CD8-positive, alpha-beta memory T cell (primary cell): ENCODE measurements at regions of chr11 and their contacts with region 1.

Region 1: DNA sequence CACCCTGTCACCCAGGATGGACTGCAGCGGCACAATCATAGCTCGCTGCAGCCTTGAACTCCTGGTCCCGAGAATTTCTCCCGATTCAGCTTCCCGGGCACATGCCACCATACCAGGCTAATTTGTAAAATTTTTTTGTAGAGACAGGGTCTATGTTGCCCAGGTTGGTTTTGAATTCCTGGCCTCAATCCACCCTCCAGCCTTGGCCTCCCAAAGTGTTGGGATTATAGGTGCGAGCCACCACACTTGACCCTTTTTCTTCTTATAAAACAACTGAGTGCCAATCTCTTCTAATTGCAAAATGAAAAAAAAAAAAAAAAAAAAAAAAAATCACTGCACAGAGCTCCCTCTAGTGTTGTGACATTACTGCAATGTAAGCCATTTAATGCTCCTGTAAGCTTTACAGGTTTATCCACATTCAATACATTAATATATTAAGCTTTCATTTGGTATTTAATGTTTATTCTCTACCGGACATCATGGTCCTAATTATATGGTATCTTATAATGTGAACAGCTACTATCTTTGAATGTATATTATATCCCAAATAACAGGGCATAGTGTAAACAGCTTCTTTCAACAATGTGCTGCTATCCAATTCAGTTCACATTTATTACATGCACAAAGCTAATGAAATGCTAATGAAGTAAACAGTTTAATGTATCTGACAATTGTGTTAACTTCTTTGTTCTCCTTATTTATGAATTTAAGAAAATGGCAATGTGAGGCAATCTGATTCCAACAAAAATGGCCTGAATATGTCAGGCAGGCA is 44.6 kb downstream of the COPB1 start:
- DNase-seq: peak in 2 of 5 donors; percentile 11 to 19
- H3K4me3 ChIP-seq: no peak overlapping the region
- H3K4me3 Mint-ChIP-seq: no peak overlapping the region
- H3K27ac ChIP-seq: no peak overlapping the region
- H3K27ac Mint-ChIP-seq: peak overlapping the region in 3 of 8 donors; percentile 33 to 59 (median 47)
- H3K4me1 ChIP-seq: no peaks in the 10 kb centered on the region
- H3K4me1 Mint-ChIP-seq: peaks cover 15 to 22% (median 15%) of the 10 kb centered on the region in 3 donors
- H3K27me3 ChIP-seq: no peaks in the 10 kb centered on the region
- H3K27me3 Mint-ChIP-seq: no peaks in the 10 kb centered on the region

Region 2: DNA sequence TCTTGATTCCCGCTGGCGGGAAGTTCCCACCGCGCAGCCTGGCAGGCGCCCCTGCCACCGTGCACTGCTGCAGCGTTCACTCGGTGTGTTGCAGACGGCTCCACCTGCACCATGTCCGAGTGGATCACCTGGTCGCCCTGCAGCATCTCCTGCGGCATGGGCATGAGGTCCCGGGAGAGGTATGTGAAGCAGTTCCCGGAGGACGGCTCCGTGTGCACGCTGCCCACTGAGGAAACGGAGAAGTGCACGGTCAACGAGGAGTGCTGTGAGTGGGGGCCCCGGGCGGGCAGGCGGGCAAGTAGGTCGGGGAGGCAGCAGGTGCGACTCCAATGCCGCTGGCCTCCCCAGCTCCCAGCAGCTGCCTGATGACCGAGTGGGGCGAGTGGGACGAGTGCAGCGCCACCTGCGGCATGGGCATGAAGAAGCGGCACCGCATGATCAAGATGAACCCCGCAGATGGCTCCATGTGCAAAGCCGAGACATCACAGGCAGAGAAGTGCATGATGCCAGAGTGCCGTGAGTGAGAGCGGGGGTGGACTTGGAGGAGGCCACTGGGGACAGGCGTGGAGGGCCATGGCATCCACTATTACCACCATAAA is 195.8 kb before region 1 on chr11:
- CTCF ChIA-PET with region 1: no interaction called
- POLR2A ChIA-PET with region 1: no interaction called
- DNase-seq: no peak
- H3K4me3 ChIP-seq: no peak overlapping the region
- H3K4me3 Mint-ChIP-seq: no peak overlapping the region
- H3K27ac ChIP-seq: no peak overlapping the region
- H3K27ac Mint-ChIP-seq: no peak overlapping the region
- H3K4me1 ChIP-seq: no peaks in the 10 kb centered on the region
- H3K4me1 Mint-ChIP-seq: no peaks in the 10 kb centered on the region
- H3K27me3 ChIP-seq: no peaks in the 10 kb centered on the region
- H3K27me3 Mint-ChIP-seq: peaks cover 0 to 6% of the 10 kb centered on the region in 2 donors

Region 3: DNA sequence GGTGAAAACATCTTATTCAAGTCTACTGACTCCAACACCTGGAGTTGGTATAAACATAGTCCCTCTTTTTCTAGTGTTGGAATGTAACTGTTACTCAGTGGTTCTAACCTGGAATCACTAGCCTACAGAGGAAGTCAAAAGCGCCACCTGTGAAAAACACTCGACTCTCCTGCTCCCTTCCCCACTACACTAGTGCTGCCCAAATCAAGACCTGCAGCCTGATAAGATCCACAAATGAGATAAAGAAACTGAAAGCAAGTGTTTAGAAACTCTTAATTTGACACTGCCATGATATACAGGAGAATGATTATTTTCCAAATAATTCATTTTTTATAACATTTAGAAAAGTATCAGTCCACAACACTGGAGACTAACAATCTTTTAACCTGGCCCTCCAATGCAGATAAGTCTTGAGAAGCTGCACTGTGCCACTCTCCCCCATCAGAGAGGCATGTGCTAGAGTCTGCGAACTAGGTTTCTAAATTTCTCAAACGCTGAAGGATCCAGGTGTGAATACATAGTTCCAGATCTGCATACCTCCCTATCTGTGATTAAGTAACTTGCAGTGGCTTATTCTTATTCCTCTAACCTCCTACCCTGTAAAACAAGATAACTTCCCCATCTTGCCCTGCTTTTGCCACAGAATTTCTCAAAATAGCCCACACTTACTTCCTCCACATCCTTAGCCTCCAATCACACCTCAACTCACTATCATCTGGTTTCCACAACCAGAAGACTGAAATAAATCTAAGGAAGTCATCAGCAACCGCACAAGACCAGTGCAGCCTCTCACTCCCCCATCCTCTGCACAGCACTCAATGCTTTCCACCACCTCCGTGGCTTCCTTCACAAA is 184.1 kb before region 1 on chr11:
- CTCF ChIA-PET with region 1: no interaction called
- POLR2A ChIA-PET with region 1: no interaction called
- DNase-seq: peak in 1 of 5 donors; percentile 29
- H3K4me3 ChIP-seq: peak overlapping the region; percentile 29
- H3K4me3 Mint-ChIP-seq: peak overlapping the region; percentile 27 to 88 (median 80)
- H3K27ac ChIP-seq: no peak overlapping the region
- H3K27ac Mint-ChIP-seq: peak overlapping the region; percentile 2 to 94 (median 79)
- H3K4me1 ChIP-seq: peaks cover 26% of the 10 kb centered on the region
- H3K4me1 Mint-ChIP-seq: peaks cover 26 to 38% (median 34%) of the 10 kb centered on the region in 3 donors
- H3K27me3 ChIP-seq: no peaks in the 10 kb centered on the region
- H3K27me3 Mint-ChIP-seq: no peaks in the 10 kb centered on the region

Region 4: GRCh38 chr11:14300661-14301304 is 154.3 kb before region 1 on chr11:
- CTCF ChIA-PET with region 1: interaction called, 159 read pairs
- POLR2A ChIA-PET with region 1: interaction called, 6 read pairs
- DNase-seq: peak in 4 of 5 donors; percentile 39 to 58 (median 44)
- H3K4me3 ChIP-seq: no peak overlapping the region
- H3K4me3 Mint-ChIP-seq: no peak overlapping the region
- H3K27ac ChIP-seq: no peak overlapping the region
- H3K27ac Mint-ChIP-seq: no peak overlapping the region
- H3K4me1 ChIP-seq: peaks cover 6% of the 10 kb centered on the region
- H3K4me1 Mint-ChIP-seq: peaks cover 49 to 59% (median 50%) of the 10 kb centered on the region in 3 donors
- H3K27me3 ChIP-seq: no peaks in the 10 kb centered on the region
- H3K27me3 Mint-ChIP-seq: no peaks in the 10 kb centered on the region

Region 5: DNA sequence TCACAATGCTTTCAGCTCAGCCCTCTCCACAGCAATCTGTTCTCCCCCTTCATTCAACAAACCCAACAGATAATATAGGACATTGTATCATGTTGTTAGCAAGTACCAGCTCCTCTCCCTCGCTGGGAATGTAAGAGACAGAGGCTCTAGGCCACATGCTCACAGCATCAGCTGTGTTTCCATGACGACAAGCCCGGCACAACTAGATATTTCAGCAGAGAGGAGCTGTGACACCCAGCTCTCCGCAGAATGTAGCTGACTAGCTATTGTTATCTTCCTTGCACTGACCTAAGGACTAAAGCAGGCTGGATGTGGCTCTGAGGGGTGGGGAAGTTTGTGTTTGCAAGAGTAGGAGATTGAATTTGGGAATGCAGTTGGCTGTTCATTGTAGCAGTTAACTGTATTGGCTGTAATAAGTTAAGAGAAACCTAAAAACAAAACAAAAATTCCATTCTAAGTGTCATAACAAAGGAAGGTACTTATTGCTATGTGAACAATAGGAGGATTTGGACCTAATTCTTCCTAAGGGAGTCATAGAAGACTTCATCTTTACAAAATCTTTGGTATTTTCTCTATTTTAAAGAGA is 68.1 kb before region 1 on chr11:
- CTCF ChIA-PET with region 1: no interaction called
- POLR2A ChIA-PET with region 1: no interaction called
- DNase-seq: no peak
- H3K4me3 ChIP-seq: no peak overlapping the region
- H3K4me3 Mint-ChIP-seq: no peak overlapping the region
- H3K27ac ChIP-seq: no peak overlapping the region
- H3K27ac Mint-ChIP-seq: peak overlapping the region in 2 of 8 donors; percentile 0 to 55
- H3K4me1 ChIP-seq: no peaks in the 10 kb centered on the region
- H3K4me1 Mint-ChIP-seq: peaks cover 0 to 7% (median 0%) of the 10 kb centered on the region in 3 donors
- H3K27me3 ChIP-seq: no peaks in the 10 kb centered on the region
- H3K27me3 Mint-ChIP-seq: peaks cover 0 to 6% of the 10 kb centered on the region in 2 donors

Region 6: DNA sequence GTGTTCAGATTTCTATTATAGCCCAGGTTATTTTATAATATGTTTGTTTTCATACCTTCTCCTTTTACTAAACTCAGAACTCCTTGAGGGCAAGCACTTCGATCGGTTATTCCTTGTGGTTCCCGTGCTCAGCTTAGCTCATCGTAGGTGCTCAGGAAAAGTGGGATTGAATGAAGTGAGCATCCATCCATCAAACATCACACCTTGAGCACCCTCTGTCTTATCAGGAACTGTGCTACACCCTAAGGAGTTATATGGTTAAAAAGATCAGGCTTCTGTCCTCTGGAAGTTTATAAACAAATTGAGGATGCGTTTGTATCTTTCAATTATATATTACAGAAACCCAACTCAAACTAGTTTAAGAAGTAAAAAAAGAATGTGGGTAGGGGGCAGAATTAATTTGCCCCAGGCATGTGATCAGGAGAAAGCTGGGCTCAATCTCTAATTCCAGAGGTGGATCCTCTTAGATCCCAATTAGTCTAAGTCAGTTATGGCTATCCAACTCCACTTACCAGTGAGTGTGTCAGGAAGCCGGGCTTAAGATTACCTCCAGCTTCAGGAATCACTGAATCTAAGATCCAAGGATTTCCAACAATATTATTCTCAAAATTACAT is 36.1 kb before region 1 on chr11:
- CTCF ChIA-PET with region 1: interaction called, 15 read pairs
- POLR2A ChIA-PET with region 1: no interaction called
- DNase-seq: no peak
- H3K4me3 ChIP-seq: no peak overlapping the region
- H3K4me3 Mint-ChIP-seq: no peak overlapping the region
- H3K27ac ChIP-seq: no peak overlapping the region
- H3K27ac Mint-ChIP-seq: peak overlapping the region in 1 of 8 donors; percentile 42
- H3K4me1 ChIP-seq: peaks cover 20% of the 10 kb centered on the region
- H3K4me1 Mint-ChIP-seq: peaks cover 34 to 36% (median 35%) of the 10 kb centered on the region in 3 donors
- H3K27me3 ChIP-seq: no peaks in the 10 kb centered on the region
- H3K27me3 Mint-ChIP-seq: no peaks in the 10 kb centered on the region